Caco-2 (cell line): ENCODE measurements at regions of chr16 and their contacts with region 1.

Region 1: DNA sequence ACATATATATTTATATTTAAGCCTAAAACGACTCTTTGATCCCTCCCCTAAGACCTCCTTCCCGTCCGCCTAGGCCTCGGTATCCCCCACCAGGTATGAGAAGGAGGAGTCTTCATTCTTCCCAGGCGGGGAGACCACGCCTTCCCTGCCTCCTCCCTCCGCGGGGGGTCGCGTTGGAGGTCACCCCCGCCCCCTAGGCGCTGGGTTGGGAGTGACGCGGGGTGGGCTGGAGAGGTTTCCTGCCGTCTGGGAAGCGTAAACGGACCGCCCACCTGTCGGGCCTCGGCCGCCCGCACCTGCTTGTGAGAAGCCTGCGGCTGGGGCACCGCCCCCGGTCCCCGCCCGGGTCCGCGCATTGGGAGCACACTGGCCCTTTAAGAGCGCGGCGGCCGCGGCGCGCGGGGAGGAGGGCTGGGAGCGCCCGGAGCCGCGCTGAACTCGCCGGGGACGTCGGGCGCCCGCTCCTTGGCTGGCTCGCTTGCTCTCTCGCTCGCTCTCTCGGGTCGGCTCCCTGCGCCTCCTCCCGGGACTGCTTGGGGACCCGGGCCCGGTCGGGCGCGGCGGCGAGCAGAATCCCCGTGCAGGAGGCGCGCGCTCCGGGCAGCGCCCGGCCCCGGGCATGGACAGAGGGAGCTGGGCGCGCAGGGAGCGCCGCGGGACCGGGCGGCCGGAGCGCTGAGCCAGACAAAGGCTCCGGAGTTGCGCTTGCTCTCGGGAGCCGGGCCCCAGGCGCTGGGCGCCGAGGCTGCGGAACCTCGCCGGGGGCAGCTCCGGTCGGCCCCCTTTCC is at the start of gene MMP15:
- DNase-seq: peak; percentile 99 to 100
- H3K4me3 ChIP-seq: peak within 1 kb of the TSS; percentile 74
- H3K4me3 Mint-ChIP-seq: peak within 1 kb of the TSS; percentile 81
- H3K27ac Mint-ChIP-seq: peak within 1 kb of the TSS; percentile 95
- H3K4me1 ChIP-seq: peaks cover 16% of the 10 kb centered on the region
- H3K4me1 Mint-ChIP-seq: peaks cover 14% of the 10 kb centered on the region
- H3K27me3 ChIP-seq: no peaks in the 10 kb centered on the region
- H3K27me3 Mint-ChIP-seq: no peaks in the 10 kb centered on the region
- CTCF ChIP-seq: no peak
- total RNA-seq, gene MMP15: 27.0 and 27.3 TPM in 2 replicates

Region 2: DNA sequence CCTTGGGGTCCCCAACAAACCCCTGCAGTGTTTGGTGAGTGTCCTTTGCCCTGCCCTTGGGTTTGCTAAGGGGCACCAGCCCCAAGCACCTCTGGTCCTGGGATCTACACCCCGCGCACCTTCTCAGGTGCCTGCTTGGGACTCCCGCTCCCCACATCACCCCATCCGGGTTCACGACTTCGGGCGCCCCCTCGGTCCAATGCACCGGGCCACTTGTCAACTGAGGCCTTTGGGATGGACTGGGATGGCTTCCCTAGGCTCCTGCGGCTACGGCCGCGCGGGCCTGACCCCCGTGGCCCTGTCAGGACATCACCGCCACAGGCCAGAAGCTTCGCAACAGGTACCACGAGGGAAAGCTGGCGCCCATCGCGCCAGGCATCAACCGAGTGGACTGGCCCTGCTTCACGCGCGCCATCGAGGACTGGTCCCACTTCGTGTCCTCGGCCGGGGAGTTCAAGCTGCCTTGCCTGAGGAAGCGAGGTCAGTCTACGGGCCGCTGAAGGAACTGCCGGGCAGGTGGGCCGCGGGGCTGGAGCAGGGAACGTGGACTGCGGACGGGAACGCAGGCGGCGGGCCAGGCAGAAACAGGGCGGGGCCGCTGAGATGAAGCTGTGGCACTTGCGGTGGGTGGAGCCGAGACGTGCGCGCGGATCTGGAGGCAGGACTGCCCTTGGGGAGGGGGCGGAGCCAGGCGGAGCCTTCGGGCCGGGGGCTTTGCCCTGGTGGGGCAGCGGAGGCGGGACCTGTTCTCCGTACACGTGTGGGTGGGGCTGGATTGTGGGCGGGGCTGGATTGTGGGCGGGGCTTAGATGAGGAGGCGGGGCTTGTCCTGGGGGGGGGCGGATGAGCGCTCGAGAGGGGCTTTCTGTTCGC is 41.0 kb before region 1 on chr16:
- CTCF ChIA-PET with region 1: interaction called, 6 read pairs
- POLR2A ChIA-PET with region 1: no interaction called
- intact Hi-C with region 1: loop called (anchors 1 kb)
- DNase-seq: peak in 1 of 2 experiments; percentile 42
- H3K4me3 ChIP-seq: no peak overlapping the region
- H3K4me3 Mint-ChIP-seq: no peak overlapping the region
- H3K27ac Mint-ChIP-seq: no peak overlapping the region
- H3K4me1 ChIP-seq: peaks cover 22% of the 10 kb centered on the region
- H3K4me1 Mint-ChIP-seq: peaks cover 10% of the 10 kb centered on the region
- H3K27me3 ChIP-seq: no peaks in the 10 kb centered on the region
- H3K27me3 Mint-ChIP-seq: no peaks in the 10 kb centered on the region
- CTCF ChIP-seq: no peak

Region 3: GRCh38 chr16:58000706-58001676 is 24.6 kb before region 1 on chr16 and contains the start of gene USB1:
- CTCF ChIA-PET with region 1: interaction called, 13 read pairs
- POLR2A ChIA-PET with region 1: interaction called, 6 read pairs
- intact Hi-C with region 1: loop called (anchors 1 kb)
- DNase-seq: peak; percentile 92 to 97
- H3K4me3 ChIP-seq: peak within 1 kb of the TSS; percentile 88
- H3K4me3 Mint-ChIP-seq: peak within 1 kb of the TSS; percentile 96
- H3K27ac Mint-ChIP-seq: peak within 1 kb of the TSS; percentile 73
- H3K4me1 ChIP-seq: peaks cover 17% of the 10 kb centered on the region
- H3K4me1 Mint-ChIP-seq: no peaks in the 10 kb centered on the region
- H3K27me3 ChIP-seq: no peaks in the 10 kb centered on the region
- H3K27me3 Mint-ChIP-seq: no peaks in the 10 kb centered on the region
- CTCF ChIP-seq: peak; percentile 76 to 97
- total RNA-seq, gene USB1: 90.5 and 91.2 TPM in 2 replicates

Region 4: GRCh38 chr16:58044266-58045019 is 18.9 kb after region 1 on chr16:
- CTCF ChIA-PET with region 1: interaction called, 3 read pairs
- POLR2A ChIA-PET with region 1: interaction called, 13 read pairs
- intact Hi-C with region 1: no loop called
- DNase-seq: no peak
- H3K4me3 ChIP-seq: no peak overlapping the region
- H3K4me3 Mint-ChIP-seq: no peak overlapping the region
- H3K27ac Mint-ChIP-seq: no peak overlapping the region
- H3K4me1 ChIP-seq: peaks cover 10% of the 10 kb centered on the region; the same call in 1 of the 2 replicates
- H3K4me1 Mint-ChIP-seq: no peaks in the 10 kb centered on the region
- H3K27me3 ChIP-seq: no peaks in the 10 kb centered on the region
- H3K27me3 Mint-ChIP-seq: no peaks in the 10 kb centered on the region
- CTCF ChIP-seq: no peak

Region 5: DNA sequence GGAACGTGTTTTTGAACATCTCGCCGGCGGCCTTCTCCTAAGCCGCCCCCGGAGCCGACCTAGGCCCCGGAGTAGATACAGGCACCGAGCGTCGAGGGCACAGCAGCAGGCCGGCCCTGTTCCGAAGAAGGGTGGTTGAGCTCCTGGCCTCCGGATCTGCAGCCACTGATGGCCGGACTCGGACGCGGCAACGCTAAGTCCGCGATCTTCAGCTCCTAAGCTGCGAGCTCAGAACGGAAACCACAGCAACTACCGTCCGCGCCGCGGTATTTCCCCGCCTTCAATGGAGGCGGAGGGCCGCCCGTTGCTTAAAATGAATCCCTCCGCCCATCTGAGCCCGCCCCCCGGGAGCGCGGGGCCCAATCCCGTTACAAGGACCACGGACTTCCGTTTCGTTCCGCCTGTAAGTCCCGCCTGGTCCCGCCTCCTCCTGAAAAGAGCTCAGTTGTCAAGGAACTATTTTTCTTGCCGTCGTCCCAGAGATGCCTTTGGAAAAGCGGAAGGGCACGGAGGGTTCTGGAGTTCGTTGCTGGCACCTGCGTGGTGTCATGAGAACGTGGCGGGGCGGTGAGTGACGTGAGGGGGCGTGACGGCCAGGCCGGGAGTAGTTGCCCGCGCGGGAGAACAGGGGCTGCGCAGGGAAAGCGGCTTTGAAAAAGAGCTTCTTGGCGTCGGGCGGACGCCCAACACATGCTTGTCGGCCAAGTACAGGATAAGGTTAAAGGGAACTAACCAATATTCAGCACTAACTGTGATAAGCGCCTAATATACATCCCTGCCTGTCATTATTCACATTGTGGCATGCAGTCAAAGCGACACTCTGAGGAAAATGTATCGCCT is 103.8 kb after region 1 on chr16 and contains the start of gene CFAP20:
- CTCF ChIA-PET with region 1: interaction called, 3 read pairs
- POLR2A ChIA-PET with region 1: interaction called, 59 read pairs
- intact Hi-C with region 1: loop called (anchors 1 kb)
- DNase-seq: peak; percentile 100
- H3K4me3 ChIP-seq: peak within 1 kb of the TSS; percentile 92
- H3K4me3 Mint-ChIP-seq: peak within 1 kb of the TSS; percentile 68
- H3K27ac Mint-ChIP-seq: peak within 1 kb of the TSS; percentile 49
- H3K4me1 ChIP-seq: peaks cover 21% of the 10 kb centered on the region
- H3K4me1 Mint-ChIP-seq: peaks cover 21% of the 10 kb centered on the region
- H3K27me3 ChIP-seq: no peaks in the 10 kb centered on the region
- H3K27me3 Mint-ChIP-seq: no peaks in the 10 kb centered on the region
- CTCF ChIP-seq: no peak
- total RNA-seq, gene CFAP20: 69.4 and 73.2 TPM in 2 replicates

Region 6: DNA sequence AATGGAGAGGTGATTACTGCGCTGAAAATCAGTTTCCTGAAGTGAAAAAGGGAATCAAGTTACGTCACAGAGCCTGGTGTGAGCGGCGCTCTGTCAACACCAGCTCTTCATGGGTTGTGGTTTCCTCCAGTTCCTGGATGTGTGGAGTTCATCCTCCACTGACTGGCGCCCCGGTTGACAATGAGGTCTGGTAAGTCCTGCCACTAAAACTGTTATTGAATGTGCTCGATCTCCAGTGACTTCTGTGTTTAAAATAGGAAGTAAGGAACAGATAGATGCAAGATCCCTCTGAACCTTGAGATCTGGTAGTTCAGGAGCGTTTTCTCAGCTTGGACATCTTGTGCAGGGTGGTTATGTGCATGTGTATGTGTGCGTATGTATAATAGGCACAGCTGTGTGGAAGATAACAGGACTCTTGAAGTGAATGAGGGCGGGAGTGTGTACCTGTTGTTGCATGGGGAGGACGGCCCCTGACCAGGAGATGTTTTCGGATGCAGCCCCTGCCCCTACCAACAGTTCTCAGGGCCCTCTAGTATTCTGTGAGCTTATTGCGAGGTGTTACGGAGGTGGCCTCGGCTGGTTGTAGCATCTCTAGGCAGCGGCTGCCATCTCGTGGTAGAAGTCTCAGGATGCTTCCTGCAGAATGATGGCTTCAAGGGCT is 730.6 kb after region 1 on chr16:
- CTCF ChIA-PET with region 1: no interaction called
- POLR2A ChIA-PET with region 1: no interaction called
- intact Hi-C with region 1: loop called (anchors 10 kb)
- DNase-seq: peak; percentile 81 to 83
- H3K4me3 ChIP-seq: no peak overlapping the region
- H3K4me3 Mint-ChIP-seq: no peak overlapping the region
- H3K27ac Mint-ChIP-seq: no peak overlapping the region
- H3K4me1 ChIP-seq: no peaks in the 10 kb centered on the region
- H3K4me1 Mint-ChIP-seq: no peaks in the 10 kb centered on the region
- H3K27me3 ChIP-seq: no peaks in the 10 kb centered on the region
- H3K27me3 Mint-ChIP-seq: peaks cover 10% of the 10 kb centered on the region
- CTCF ChIP-seq: peak; percentile 85 to 94